Mammary epithelial cell (primary cell): ENCODE measurements at regions of chr2 and their contacts with region 1.

Region 1: DNA sequence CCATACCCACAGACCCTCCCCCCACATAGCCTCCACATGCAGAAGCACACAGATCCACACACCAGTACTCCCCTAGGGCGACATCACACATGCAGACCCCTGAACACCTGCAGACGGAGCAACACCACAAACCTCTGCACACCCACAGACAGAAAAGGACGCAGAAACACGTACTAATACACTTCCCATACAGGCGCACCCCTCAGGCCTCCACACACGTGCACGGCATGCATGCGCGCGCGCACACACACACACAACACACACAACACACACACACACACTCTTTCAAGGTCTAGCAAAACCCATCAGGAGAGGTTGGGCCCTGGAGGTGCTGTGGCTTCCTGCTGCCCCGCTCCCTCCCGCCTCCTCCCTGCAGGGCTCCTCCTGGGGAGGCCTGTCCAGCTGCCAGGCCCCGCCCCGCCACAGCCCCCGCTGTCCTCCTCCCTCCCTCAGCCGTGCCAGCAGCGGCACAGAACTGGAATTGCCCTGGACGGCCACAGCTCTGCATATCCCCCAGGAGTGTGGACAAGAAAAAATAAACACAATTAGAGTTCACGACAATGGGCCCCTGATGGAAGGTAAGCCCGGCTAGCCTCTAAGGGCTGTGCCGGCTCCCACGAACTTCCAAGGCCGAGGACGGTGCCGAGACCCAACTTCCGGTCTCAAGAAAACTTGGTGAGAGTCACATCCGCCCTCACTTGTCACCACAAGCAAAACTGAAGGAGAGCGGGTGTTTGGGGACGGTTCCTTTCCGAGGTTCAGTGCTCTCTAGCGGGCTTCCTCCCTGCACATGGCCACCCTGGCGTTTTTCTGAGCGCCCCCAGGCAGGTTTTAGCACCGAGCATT is 6.8 kb downstream of the ZFP36L2 start:
- DNase-seq: peak; percentile 88
- H3K4me3 ChIP-seq: peak overlapping the region; percentile 37 to 44 (median 41)
- H3K27ac ChIP-seq: peak overlapping the region; percentile 88
- H3K4me1 ChIP-seq: peaks cover 46% of the 10 kb centered on the region
- H3K27me3 ChIP-seq: no peaks in the 10 kb centered on the region
- CTCF ChIP-seq: peak in 1 of 2 donors; percentile 3

Region 2: GRCh38 chr2:42974721-42975717 is 244.6 kb before region 1 on chr2:
- CTCF ChIA-PET with region 1: no interaction called
- dilution Hi-C with region 1: loop called (anchors 5 kb)
- in situ Hi-C with region 1: loop called in 1 of 2 experiments (anchors 10 kb)
- intact Hi-C with region 1: loop called (anchors 1 kb)
- DNase-seq: no peak
- H3K4me3 ChIP-seq: no peak overlapping the region
- H3K27ac ChIP-seq: peak overlapping the region; percentile 11
- H3K4me1 ChIP-seq: peaks cover 46% of the 10 kb centered on the region
- H3K27me3 ChIP-seq: no peaks in the 10 kb centered on the region
- CTCF ChIP-seq: peak; percentile 80 to 92

Region 3: DNA sequence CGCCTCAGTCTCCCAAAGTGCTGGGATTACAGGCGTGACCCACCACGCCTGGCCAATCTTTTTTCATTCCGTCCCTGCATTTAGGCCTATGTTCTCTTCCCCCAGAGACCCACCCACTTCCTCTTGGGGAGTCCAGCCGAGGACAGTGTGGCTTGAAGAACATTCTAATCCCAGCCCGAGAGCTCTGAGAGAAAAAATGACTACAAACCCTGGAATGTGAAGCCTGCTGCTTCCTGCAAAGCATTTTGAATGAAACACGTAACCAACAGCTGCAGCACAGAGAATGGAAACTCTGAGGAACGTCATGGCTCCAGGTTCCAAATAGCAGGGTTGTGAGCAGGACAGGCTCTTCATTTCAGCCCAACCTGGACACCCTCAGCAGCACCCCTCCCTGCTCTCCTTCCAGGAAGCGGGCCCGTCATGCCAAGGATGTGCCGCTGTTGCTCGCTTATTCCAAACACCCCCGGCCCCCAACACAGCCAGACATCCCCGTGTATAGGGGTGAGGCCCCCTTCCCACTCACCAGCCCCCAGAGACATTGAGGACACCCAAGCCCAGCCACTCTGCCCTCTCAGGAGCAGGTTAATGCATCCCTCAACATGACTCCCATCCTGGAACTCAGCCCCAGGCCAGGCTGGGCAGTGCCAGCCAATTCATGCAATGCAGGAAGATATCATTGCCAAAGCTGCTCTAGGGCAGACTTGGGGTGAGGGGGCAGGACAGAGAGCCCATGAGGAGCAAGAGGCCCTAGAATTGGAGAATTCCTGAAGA is 133.0 kb before region 1 on chr2:
- CTCF ChIA-PET with region 1: interaction called, 3 read pairs
- dilution Hi-C with region 1: no loop called
- in situ Hi-C with region 1: no loop called
- intact Hi-C with region 1: loop called (anchors 2 kb)
- DNase-seq: peak; percentile 99
- H3K4me3 ChIP-seq: no peak overlapping the region
- H3K27ac ChIP-seq: peak overlapping the region; percentile 94
- H3K4me1 ChIP-seq: peaks cover 70% of the 10 kb centered on the region
- H3K27me3 ChIP-seq: no peaks in the 10 kb centered on the region
- CTCF ChIP-seq: no peak

Region 4: GRCh38 chr2:43158259-43158880 is 61.2 kb before region 1 on chr2:
- CTCF ChIA-PET with region 1: no interaction called
- dilution Hi-C with region 1: no loop called
- in situ Hi-C with region 1: loop called in 1 of 2 experiments (anchors 10 kb)
- intact Hi-C with region 1: loop called (anchors 1 kb)
- DNase-seq: peak; percentile 94
- H3K4me3 ChIP-seq: no peak overlapping the region
- H3K27ac ChIP-seq: peak overlapping the region; percentile 93
- H3K4me1 ChIP-seq: peaks cover 52% of the 10 kb centered on the region
- H3K27me3 ChIP-seq: no peaks in the 10 kb centered on the region
- CTCF ChIP-seq: no peak

Region 5: DNA sequence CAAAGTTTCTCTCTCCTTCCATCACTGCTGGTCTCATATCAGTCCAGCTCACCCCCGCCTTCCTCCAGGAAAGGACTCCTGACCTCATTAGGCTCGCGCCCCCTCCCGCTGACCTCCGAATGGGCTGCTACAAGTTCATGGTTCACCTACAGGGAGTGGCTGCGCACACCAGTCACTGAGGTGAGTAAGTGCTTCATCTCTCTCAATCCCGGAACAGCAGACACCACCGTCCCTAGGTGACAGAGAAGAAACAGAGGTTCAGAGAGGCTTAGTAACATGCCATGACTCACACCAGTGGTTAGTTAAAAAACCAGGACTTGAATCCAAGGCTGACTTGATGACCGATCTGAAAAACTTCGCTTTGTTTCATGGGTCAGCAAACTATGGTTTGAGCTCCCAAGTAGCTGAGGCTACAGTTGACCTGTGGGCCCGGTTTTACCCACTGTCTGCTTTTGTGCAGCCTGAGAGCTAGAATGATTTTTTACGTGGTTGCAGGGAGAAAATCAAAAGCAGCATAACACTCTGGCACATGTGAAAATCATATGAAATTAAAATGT is 35.2 kb before region 1 on chr2:
- CTCF ChIA-PET with region 1: no interaction called
- dilution Hi-C with region 1: loop called (anchors 5 kb)
- in situ Hi-C with region 1: no loop called
- intact Hi-C with region 1: no loop called
- DNase-seq: peak; percentile 95
- H3K4me3 ChIP-seq: no peak overlapping the region
- H3K27ac ChIP-seq: peak overlapping the region; percentile 47
- H3K4me1 ChIP-seq: peaks cover 17% of the 10 kb centered on the region
- H3K27me3 ChIP-seq: no peaks in the 10 kb centered on the region
- CTCF ChIP-seq: no peak